ENCODE measurements at regions of chr2 and their contacts with region 1.

Region 1: GRCh38 chr2:25294573-25295462 is 46.9 kb downstream of the DNMT3A start:
- DNase-seq: peak; percentile 95

Region 2: DNA sequence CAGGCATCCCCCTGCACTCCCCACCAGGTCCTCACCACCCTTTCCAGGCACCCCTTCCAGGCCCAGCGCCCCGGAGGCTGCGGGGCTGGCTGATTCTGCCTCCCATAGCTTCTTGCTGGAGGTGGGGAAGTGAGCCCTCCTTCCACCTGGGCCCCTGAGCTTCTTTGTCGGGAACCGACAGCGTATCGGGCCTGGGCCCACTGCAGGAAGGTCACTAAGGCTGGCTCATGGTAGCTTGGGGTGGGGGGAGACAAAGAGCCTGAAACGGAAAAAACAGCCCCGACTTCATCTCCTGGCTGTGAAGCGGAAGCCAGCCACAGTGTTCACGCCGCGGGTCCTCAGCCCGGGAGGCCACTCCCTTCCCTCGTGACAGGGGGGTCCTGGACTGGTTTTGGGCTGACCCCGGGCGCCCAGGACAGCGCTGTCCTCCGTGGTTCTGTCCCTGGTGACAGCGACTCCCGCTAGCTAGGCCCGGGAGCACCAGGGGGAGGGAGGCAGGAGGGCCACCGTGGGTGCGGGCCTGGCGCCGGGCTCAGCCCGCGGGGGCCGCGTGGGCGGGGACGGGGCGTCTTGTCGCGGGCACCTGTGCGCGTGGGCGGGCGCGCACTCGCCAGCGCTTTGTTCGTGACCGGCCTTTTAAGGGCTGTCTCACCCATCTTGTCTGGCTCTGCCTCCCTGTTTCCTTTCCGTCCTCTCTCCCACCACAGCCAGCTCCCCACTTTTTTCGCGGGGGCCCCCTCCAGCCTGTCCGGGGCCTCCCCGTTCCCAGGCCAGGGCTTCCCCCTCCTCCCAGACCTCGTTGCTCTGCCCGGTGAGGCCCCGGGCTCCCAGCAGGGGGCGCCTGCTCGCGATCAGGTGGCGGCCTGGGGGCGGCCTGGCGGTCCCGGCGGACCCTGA is 18.0 kb before region 1 on chr2:
- intact Hi-C with region 1: loop called (anchors 1 kb)
- DNase-seq: peak; percentile 86

Region 3: GRCh38 chr2:25314514-25315315 is 19.9 kb after region 1 on chr2:
- intact Hi-C with region 1: loop called (anchors 2 kb)
- DNase-seq: peak; percentile 86

Region 4: GRCh38 chr2:25707927-25708590 is 413.2 kb after region 1 on chr2:
- intact Hi-C with region 1: no loop called
- DNase-seq: no peak

Measured in cardiac septum (tissue), 1 donor.